ENCODE measurements at regions of chr7 and their contacts with region 1.

Region 1: DNA sequence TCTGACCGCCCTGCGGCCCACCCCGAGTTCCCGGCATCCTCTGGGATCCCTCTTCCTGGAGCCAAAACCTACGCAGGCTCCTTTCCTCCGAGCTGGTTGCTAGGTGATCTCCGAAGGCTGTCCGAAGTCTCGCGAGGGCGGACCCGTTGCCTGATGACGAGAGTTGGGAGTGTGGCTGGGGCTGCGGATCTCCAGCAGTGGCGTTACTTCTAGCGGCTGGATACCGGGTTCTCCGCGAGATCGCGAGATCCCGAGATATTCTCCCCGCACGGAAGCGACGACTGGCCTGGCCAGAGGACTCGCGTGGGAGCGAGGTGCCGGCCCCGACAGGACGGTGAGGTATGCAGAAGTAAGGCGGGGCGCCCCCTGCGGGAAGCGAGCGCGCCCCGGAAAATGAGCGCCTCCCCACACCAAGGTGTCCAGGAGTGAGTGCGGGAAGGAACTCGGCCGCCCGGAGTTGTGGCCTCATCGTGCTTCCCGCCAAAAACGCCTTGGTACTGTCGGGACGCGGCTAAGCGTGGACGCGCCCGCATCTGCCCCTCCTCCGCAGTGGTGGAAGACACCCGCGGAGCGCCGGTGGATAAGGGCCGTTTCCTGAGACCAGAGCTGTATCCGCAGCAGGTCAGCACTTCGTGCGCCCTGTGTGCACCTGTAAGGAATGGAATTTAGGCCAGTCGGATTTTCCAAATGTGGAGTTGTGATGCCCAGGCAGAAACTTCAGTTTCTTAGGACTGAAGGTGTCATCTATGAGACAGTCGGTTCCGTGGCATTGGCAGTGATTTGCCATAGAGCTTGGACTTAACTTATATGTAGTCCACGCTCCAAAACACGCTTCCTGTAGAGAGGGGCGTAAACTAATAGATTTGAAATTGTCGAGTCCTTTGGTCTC is at the start of gene AGBL3:
- DNase-seq: peak; percentile 78 to 94 (median 89)
- ATAC-seq: peak; percentile 87
- H3K4me3 ChIP-seq: peak within 1 kb of the TSS; percentile 73 to 83
- H3K4me3 Mint-ChIP-seq: peak within 1 kb of the TSS; percentile 98
- H3K27ac ChIP-seq: peak within 1 kb of the TSS; percentile 90 to 99
- H3K27ac Mint-ChIP-seq: peak within 1 kb of the TSS; percentile 99
- H3K4me1 ChIP-seq: peaks cover 35% of the 10 kb centered on the region
- H3K4me1 Mint-ChIP-seq: peaks cover 42% of the 10 kb centered on the region
- H3K27me3 ChIP-seq: no peaks in the 10 kb centered on the region
- H3K27me3 Mint-ChIP-seq: no peaks in the 10 kb centered on the region
- CTCF ChIP-seq: peak; percentile 68
- total RNA-seq, gene AGBL3: 2.7 to 2.8 TPM

Region 2: DNA sequence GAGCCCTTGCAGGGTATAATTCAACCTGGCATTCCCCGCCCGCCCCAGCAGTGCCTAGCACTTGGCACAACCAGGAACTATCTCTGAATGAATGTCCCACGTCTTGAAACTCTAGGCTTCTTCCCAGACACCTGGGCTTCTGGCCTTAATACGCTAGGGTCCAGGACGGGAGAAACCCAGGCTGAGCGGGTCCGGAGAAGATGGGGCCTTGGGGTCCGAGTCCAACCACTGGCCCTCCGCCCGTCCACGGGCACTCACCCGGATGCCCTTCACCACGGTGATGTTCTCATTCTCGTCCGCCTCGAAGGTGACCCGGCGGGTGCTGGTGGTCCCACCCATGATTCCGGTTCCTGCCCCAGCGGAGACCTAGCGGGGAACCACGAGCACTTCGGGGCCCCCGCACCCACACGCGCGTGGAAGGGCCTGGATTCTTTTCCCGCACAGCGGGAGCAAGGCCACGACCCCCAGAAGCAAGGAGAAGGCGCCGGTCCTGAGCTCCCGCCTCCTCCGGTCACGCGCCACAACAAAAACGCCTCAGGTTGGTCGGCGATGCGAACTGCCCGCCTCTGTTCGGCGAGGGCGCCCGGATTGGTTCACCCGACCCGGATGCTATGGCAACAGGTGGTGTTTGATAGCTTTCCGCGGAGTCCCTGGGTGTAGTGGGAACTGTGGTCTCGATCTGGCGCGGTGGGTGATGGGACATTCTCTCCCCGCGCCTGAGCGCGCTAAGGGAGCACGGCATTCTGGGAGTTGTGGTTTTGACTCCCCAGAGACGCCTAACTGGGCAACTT is 1904.8 kb before region 1 on chr7 and contains the start of gene CHCHD3:
- CTCF ChIA-PET with region 1: no interaction called
- POLR2A ChIA-PET with region 1: no interaction called
- intact Hi-C with region 1: loop called in 1 of 2 experiments (anchors 5 kb)
- DNase-seq: peak; percentile 88 to 98 (median 96)
- ATAC-seq: peak; percentile 98
- H3K4me3 ChIP-seq: peak within 1 kb of the TSS; percentile 94 to 96
- H3K4me3 Mint-ChIP-seq: peak within 1 kb of the TSS; percentile 92
- H3K27ac ChIP-seq: peak within 1 kb of the TSS; percentile 92 to 94
- H3K27ac Mint-ChIP-seq: peak within 1 kb of the TSS; percentile 96
- H3K4me1 ChIP-seq: peaks cover 16% of the 10 kb centered on the region
- H3K4me1 Mint-ChIP-seq: peaks cover 33% of the 10 kb centered on the region
- H3K27me3 ChIP-seq: no peaks in the 10 kb centered on the region
- H3K27me3 Mint-ChIP-seq: peaks cover 3% of the 10 kb centered on the region
- CTCF ChIP-seq: no peak
- total RNA-seq, gene CHCHD3: 19.0 to 20.4 TPM

Region 3: GRCh38 chr7:135001390-135002165 is 15.0 kb after region 1 on chr7:
- CTCF ChIA-PET with region 1: interaction called, 18 read pairs
- POLR2A ChIA-PET with region 1: interaction called, 3 read pairs
- intact Hi-C with region 1: loop called in 1 of 2 experiments (anchors 2 kb)
- DNase-seq: no peak
- ATAC-seq: no peak
- H3K4me3 ChIP-seq: no peak overlapping the region
- H3K4me3 Mint-ChIP-seq: no peak overlapping the region
- H3K27ac ChIP-seq: no peak overlapping the region
- H3K27ac Mint-ChIP-seq: no peak overlapping the region
- H3K4me1 ChIP-seq: peaks cover 25% of the 10 kb centered on the region
- H3K4me1 Mint-ChIP-seq: peaks cover 24% of the 10 kb centered on the region
- H3K27me3 ChIP-seq: no peaks in the 10 kb centered on the region
- H3K27me3 Mint-ChIP-seq: no peaks in the 10 kb centered on the region
- CTCF ChIP-seq: no peak

Region 4: DNA sequence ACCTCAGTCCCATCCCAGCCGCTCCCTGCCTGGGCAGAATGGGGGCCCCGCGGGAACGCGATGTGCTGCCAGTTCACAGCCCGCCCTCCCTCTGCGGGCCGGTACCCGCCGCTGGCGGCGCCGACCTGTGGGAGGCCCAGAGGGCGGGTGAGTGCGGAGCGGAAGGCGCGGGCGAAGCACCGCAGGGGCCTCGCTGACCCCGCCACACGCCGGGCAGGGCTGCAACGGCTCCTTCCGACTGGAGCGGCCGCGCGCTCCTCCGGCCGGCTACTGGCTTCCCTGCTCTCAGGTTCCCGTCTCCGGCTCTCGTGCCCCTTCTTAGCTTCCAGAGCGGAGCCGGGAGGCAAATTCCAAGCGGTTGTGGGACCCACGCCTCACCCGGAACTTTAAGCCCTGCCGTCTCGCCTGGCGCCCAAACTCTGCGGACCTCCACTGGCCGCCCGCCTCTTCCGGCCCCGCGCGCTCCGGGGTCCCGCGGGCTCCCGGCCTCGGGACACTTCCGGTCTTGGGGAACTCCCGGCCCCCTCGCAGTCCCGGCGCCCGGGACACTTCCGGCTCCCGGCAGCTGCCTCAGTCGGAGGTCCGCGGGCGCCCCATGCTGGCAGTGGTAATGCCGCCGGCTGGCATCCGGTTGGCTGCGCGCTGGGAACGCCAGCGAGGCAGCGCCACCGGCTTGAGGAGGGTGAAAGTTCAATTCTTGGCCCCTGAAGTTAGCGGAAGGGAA is 183.8 kb after region 1 on chr7 and contains the start of gene CYREN:
- CTCF ChIA-PET with region 1: interaction called, 43 read pairs
- POLR2A ChIA-PET with region 1: interaction called, 50 read pairs
- intact Hi-C with region 1: loop called (anchors 1 kb)
- DNase-seq: peak; percentile 75 to 95 (median 91)
- ATAC-seq: peak; percentile 75
- H3K4me3 ChIP-seq: peak within 1 kb of the TSS; percentile 89 to 92
- H3K4me3 Mint-ChIP-seq: peak within 1 kb of the TSS; percentile 84
- H3K27ac ChIP-seq: peak within 1 kb of the TSS; percentile 94 to 98
- H3K27ac Mint-ChIP-seq: peak within 1 kb of the TSS; percentile 97
- H3K4me1 ChIP-seq: peaks cover 38% of the 10 kb centered on the region
- H3K4me1 Mint-ChIP-seq: peaks cover 47% of the 10 kb centered on the region
- H3K27me3 ChIP-seq: no peaks in the 10 kb centered on the region
- H3K27me3 Mint-ChIP-seq: no peaks in the 10 kb centered on the region
- CTCF ChIP-seq: peak; percentile 71
- total RNA-seq, gene CYREN: 14.0 to 15.2 TPM

Region 5: DNA sequence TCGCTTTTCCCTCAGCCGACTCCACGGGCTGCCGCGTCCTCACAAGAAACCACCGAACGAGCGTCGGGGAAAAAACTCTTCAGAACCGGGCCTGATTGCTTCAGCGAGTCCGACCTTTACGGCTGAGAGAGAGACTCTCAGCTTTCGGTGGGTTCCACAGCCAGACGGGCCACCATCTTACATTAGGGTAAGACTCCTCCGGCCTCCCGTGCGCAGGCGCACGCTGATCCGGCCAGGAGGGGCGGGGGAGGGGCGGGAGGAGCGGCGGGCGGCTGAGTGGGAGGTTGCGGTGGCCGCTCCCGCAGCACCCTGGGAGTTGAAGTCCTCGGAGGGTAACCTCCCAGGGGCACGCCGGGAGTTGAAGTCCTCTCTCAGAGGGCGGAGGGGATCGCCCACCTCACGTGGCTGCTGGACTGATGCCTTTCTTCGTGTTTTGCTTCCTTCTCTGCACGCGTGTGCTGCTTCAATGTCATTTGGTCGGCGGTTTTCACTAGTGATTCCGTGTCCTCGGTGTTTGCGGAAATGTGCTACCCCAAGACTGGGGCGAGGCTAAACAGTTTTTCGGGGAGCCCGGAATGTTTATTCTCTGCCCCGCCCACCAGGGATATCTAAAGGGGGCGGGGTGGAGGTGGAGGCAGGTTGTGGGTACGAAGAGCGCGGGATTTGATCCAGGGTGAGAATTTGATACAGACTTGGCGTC is 523.4 kb after region 1 on chr7 and contains the start of gene CNOT4:
- CTCF ChIA-PET with region 1: no interaction called
- POLR2A ChIA-PET with region 1: no interaction called
- intact Hi-C with region 1: loop called (anchors 1 to 10 kb)
- DNase-seq: peak; percentile 94 to 98 (median 97)
- ATAC-seq: peak; percentile 94
- H3K4me3 ChIP-seq: peak within 1 kb of the TSS; percentile 80 to 84
- H3K4me3 Mint-ChIP-seq: no peak within 1 kb of the TSS
- H3K27ac ChIP-seq: peak within 1 kb of the TSS; percentile 78 to 95
- H3K27ac Mint-ChIP-seq: no peak within 1 kb of the TSS
- H3K4me1 ChIP-seq: peaks cover 26% of the 10 kb centered on the region
- H3K4me1 Mint-ChIP-seq: peaks cover 14% of the 10 kb centered on the region
- H3K27me3 ChIP-seq: no peaks in the 10 kb centered on the region
- H3K27me3 Mint-ChIP-seq: no peaks in the 10 kb centered on the region
- CTCF ChIP-seq: no peak
- total RNA-seq, gene CNOT4: 24.8 to 25.9 TPM

Region 6: GRCh38 chr7:135977007-135977741 is 990.6 kb after region 1 on chr7 and contains the start of gene MTPN:
- CTCF ChIA-PET with region 1: no interaction called
- POLR2A ChIA-PET with region 1: no interaction called
- intact Hi-C with region 1: loop called in 1 of 2 experiments (anchors 2 kb)
- DNase-seq: peak; percentile 94 to 98 (median 98)
- ATAC-seq: peak; percentile 81
- H3K4me3 ChIP-seq: peak within 1 kb of the TSS; percentile 89 to 93
- H3K4me3 Mint-ChIP-seq: peak within 1 kb of the TSS; percentile 92
- H3K27ac ChIP-seq: peak within 1 kb of the TSS; percentile 82 to 88
- H3K27ac Mint-ChIP-seq: peak within 1 kb of the TSS; percentile 93
- H3K4me1 ChIP-seq: peaks cover 71% of the 10 kb centered on the region
- H3K4me1 Mint-ChIP-seq: peaks cover 79% of the 10 kb centered on the region
- H3K27me3 ChIP-seq: no peaks in the 10 kb centered on the region
- H3K27me3 Mint-ChIP-seq: no peaks in the 10 kb centered on the region
- CTCF ChIP-seq: no peak
- total RNA-seq, gene MTPN: 91.9 to 101 TPM

Measured in CD8-positive, alpha-beta T cell (primary cell).